Adrenal gland (tissue), 19 donors: ENCODE measurements at regions of chr6 and their contacts with region 1.

Region 1: GRCh38 chr6:83057705-83058321 is 7.8 kb downstream of the UBE3D start:
- DNase-seq: peak; percentile 22 to 75 (median 34)
- H3K4me3 ChIP-seq: no peak overlapping the region
- H3K27ac ChIP-seq: no peak overlapping the region
- H3K4me1 ChIP-seq: no peaks in the 10 kb centered on the region
- H3K27me3 ChIP-seq: no peaks in the 10 kb centered on the region
- CTCF ChIP-seq: peak; percentile 36 to 64 (median 56)
- POLR2A ChIP-seq: no peak

Region 2: DNA sequence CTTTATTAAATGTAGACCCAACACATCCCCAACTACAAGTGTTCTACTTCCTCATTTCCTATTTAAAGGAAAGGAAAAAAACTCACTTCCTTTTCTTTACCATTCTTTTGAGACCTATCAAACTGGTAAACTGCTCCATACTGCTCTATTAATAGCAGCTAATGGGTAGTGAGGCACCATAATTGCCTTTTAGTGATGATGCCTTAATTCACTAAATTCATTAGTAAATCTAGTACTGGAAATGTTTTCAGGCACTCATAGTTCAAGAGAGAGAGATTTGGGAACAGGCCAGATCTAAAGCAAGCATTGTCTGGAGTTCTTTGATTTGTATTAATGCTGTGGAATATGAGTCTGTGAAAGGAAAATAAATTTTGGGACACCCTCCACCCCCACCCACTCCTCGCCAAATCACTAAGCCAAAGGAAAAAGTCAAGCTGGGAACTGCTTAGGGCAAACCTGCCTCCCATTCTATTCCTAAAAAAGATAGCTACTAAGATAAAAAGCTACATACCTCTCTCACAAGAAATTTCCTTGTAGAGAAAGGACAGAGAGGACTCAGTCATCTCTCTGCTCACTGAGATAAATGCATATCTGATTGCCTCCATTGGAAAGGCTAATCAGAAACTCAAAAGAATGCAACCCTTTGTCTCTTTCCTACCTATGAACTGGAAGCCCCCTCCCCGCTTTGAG is 796.7 kb before region 1 on chr6:
- intact Hi-C with region 1: loop called (anchors 5 to 10 kb)
- DNase-seq: no peak
- H3K4me3 ChIP-seq: no peak overlapping the region
- H3K27ac ChIP-seq: no peak overlapping the region
- H3K4me1 ChIP-seq: peaks cover 0 to 16% of the 10 kb centered on the region in 2 donors
- H3K27me3 ChIP-seq: no peaks in the 10 kb centered on the region
- CTCF ChIP-seq: no peak
- POLR2A ChIP-seq: no peak

Region 3: DNA sequence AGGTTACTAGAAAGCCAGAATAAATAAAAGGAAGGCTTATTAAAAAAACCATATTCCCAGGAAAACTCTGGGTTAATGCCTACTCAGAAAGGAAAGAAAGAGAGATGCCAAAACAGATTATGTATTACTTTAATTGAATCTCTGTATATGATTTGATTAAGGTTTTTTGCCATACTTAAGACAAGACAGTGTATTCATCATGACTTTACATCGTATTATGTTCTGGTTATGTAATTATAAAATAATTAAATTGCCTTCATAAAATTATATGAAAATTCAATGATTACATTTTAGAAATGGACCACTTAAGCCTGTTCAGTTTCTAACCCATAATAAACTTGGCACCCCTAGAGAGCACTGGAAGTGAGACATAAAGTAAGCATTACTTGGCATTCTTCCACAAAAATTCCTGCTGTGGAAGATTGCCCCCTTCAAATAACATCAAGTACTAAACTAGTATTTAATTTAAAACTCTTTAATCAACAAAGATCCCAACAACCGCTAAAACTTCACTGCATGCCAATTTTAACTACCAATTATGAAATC is 789.4 kb before region 1 on chr6:
- intact Hi-C with region 1: loop called (anchors 5 to 10 kb)
- DNase-seq: no peak
- H3K4me3 ChIP-seq: no peak overlapping the region
- H3K27ac ChIP-seq: no peak overlapping the region
- H3K4me1 ChIP-seq: no peaks in the 10 kb centered on the region
- H3K27me3 ChIP-seq: no peaks in the 10 kb centered on the region
- CTCF ChIP-seq: no peak
- POLR2A ChIP-seq: no peak